ENCODE measurements at regions of chr2 and their contacts with region 1.

Region 1: GRCh38 chr2:222904557-222905258 is 43.9 kb downstream of the ACSL3 start:
- DNase-seq: no peak

Region 2: GRCh38 chr2:222707689-222708525 is 196.8 kb before region 1 on chr2:
- intact Hi-C with region 1: loop called in 1 of 2 experiments (anchors 5 kb)
- DNase-seq: peak; percentile 93

Region 3: DNA sequence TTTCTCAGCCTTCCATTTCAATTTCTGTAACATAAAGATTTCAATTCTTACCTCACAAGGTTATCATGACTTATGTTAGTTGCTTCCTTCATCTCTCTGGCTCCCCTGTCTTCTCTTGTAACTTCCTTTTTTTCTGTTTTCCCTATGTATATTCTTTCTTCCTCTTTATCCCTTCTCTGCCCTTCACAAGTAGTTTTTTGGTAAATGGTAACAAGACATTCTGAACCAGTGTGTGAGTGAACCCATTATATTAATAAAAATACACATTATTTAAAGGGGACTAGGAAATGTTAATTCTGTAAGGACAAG is 35.5 kb before region 1 on chr2:
- intact Hi-C with region 1: loop called in 1 of 2 experiments (anchors 1 kb)
- DNase-seq: no peak

Measured in posterior vena cava (tissue), 2 donors.